PC-9 (cell line): ENCODE measurements at regions of chr4 and their contacts with region 1.

Region 1: GRCh38 chr4:156475322-156475721 is 496.3 kb downstream of the PDGFC start:
- DNase-seq: no peak
- H3K4me3 ChIP-seq: no peak overlapping the region
- H3K27ac ChIP-seq: no peak overlapping the region
- H3K4me1 ChIP-seq: no peaks in the 10 kb centered on the region
- H3K27me3 ChIP-seq: no peaks in the 10 kb centered on the region
- CTCF ChIP-seq: peak; percentile 69

Region 2: DNA sequence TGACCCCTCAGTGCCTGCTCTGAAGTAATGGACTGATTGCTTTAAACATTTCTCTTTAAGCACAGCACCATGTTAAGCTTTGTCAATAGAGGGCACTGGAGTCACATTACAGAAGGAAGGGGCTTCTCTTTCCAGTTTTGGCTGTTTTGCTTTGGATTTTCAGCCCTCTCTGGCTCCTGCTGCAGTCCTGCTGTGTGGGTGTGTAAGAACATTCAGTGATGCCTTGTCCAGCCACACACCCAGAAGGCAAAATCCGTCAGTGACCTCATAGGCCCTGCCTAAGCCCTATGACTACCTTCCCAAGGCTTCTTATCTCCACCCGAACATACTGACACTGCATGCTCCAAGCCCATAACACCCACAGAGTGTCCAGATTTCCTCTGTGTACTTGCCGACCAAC is 306.3 kb before region 1 on chr4:
- CTCF ChIA-PET with region 1: interaction called, 5 read pairs
- POLR2A ChIA-PET with region 1: no interaction called
- intact Hi-C with region 1: loop called (anchors 10 kb)
- DNase-seq: peak in 1 of 2 experiments; percentile 28
- H3K4me3 ChIP-seq: no peak overlapping the region
- H3K27ac ChIP-seq: no peak overlapping the region
- H3K4me1 ChIP-seq: no peaks in the 10 kb centered on the region
- H3K27me3 ChIP-seq: no peaks in the 10 kb centered on the region
- CTCF ChIP-seq: peak; percentile 43; the same call in 1 of the 2 replicates

Region 3: GRCh38 chr4:156677131-156677531 is 201.8 kb after region 1 on chr4:
- CTCF ChIA-PET with region 1: no interaction called
- POLR2A ChIA-PET with region 1: no interaction called
- intact Hi-C with region 1: loop called (anchors 5 kb)
- DNase-seq: no peak
- H3K4me3 ChIP-seq: no peak overlapping the region
- H3K27ac ChIP-seq: no peak overlapping the region
- H3K4me1 ChIP-seq: no peaks in the 10 kb centered on the region
- H3K27me3 ChIP-seq: no peaks in the 10 kb centered on the region
- CTCF ChIP-seq: peak; percentile 58

Region 4: GRCh38 chr4:156931267-156931666 is 455.9 kb after region 1 on chr4:
- CTCF ChIA-PET with region 1: no interaction called
- POLR2A ChIA-PET with region 1: no interaction called
- intact Hi-C with region 1: loop called (anchors 5 kb)
- DNase-seq: peak; percentile 62 to 73
- H3K4me3 ChIP-seq: no peak overlapping the region
- H3K27ac ChIP-seq: peak overlapping the region; percentile 78
- H3K4me1 ChIP-seq: peaks cover 16% of the 10 kb centered on the region
- H3K27me3 ChIP-seq: no peaks in the 10 kb centered on the region
- CTCF ChIP-seq: no peak

Region 5: GRCh38 chr4:157128395-157128794 is 653.1 kb after region 1 on chr4:
- CTCF ChIA-PET with region 1: no interaction called
- POLR2A ChIA-PET with region 1: no interaction called
- intact Hi-C with region 1: loop called (anchors 1 kb)
- DNase-seq: peak; percentile 37 to 43
- H3K4me3 ChIP-seq: no peak overlapping the region
- H3K27ac ChIP-seq: no peak overlapping the region
- H3K4me1 ChIP-seq: no peaks in the 10 kb centered on the region
- H3K27me3 ChIP-seq: no peaks in the 10 kb centered on the region
- CTCF ChIP-seq: peak; percentile 57

Region 6: GRCh38 chr4:157220371-157220881 is 745.1 kb after region 1 on chr4 and contains the start of gene GRIA2:
- CTCF ChIA-PET with region 1: no interaction called
- POLR2A ChIA-PET with region 1: no interaction called
- intact Hi-C with region 1: loop called (anchors 1 kb)
- DNase-seq: peak in 1 of 2 experiments; percentile 72
- H3K4me3 ChIP-seq: no peak within 1 kb of the TSS; the same call in 1 of the 2 replicates
- H3K27ac ChIP-seq: no peak within 1 kb of the TSS
- H3K4me1 ChIP-seq: no peaks in the 10 kb centered on the region
- H3K27me3 ChIP-seq: no peaks in the 10 kb centered on the region
- CTCF ChIP-seq: no peak
- total RNA-seq, gene GRIA2: not detected in 2 replicates

Region 7: DNA sequence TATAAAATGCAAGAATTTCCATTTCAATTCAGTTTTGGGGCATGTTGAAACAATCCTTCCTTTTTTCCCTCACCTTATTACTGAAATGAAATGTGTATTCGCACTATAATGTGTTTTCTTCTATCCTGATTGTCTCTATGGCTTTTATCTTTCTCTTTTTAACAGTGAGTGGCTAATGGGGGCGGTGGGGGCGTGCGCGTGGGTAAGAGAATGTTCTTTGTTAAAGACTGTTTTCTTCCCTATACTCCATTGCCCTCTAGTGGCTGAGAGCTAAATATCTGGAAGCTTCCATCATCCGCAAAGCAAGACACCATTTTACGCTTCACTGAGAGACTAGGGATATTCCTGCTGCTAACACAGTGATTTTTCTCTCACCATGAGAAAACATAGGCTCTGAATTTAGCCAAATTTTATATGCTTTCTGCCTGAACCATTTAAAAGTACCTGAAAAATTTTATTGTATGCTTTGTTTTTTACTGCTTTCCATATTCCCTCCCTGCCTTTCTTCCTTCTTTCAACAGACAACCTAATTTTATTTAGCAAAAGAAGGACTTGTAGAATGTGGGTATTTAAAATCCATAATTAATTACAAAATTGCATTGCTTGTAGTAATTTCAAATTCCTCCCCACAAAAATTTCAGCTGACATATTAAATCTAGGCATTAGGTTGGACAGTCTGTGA is 1503.5 kb after region 1 on chr4:
- CTCF ChIA-PET with region 1: interaction called, 3 read pairs
- POLR2A ChIA-PET with region 1: no interaction called
- intact Hi-C with region 1: loop called (anchors 5 kb)
- DNase-seq: peak in 1 of 2 experiments; percentile 22
- H3K4me3 ChIP-seq: no peak overlapping the region
- H3K27ac ChIP-seq: no peak overlapping the region
- H3K4me1 ChIP-seq: no peaks in the 10 kb centered on the region
- H3K27me3 ChIP-seq: no peaks in the 10 kb centered on the region
- CTCF ChIP-seq: peak; percentile 90